ENCODE measurements at regions of chr22 and their contacts with region 1.

Region 1: DNA sequence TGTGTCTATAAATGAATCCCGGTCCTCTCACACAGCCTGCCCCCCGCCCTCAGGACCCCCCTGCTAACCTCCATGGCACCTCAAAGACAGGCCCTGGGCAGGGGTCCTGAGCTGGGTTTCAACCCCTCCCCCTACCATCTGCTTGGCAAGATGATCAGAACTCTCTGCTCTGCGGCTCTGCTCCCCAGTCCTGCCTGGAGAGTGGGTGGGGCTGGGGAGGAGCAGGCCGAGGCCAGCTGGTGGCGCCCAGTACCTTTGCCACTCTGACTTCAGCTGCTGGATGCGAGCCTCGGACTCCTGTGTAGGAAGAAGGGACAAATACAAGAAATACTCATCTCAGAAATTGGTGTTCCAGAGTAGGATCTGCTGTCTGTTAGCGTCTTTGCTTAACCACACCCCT is 15.0 kb downstream of the SUN2 start:
- DNase-seq: no peak
- ATAC-seq: peak in 1 of 2 experiments; percentile 27; a peak in 1 of 6 replicates
- H3K4me3 ChIP-seq: no peak overlapping the region
- H3K27ac ChIP-seq: no peak overlapping the region
- H3K4me1 ChIP-seq: no peaks in the 10 kb centered on the region
- CTCF ChIP-seq: no peak
- EP300 ChIP-seq: no peak
- POLR2A ChIP-seq: no peak
- RAD21 ChIP-seq: peak in 1 of 2 experiments; percentile 10; a peak in 1 of 5 replicates

Region 2: GRCh38 chr22:38631724-38632123 is 109.0 kb before region 1 on chr22:
- CTCF ChIA-PET with region 1: no interaction called
- POLR2A ChIA-PET with region 1: no interaction called
- DNase-seq: no peak
- ATAC-seq: no peak
- H3K4me3 ChIP-seq: no peak overlapping the region
- H3K27ac ChIP-seq: no peak overlapping the region
- H3K4me1 ChIP-seq: no peaks in the 10 kb centered on the region
- CTCF ChIP-seq: no peak
- EP300 ChIP-seq: no peak
- POLR2A ChIP-seq: no peak
- RAD21 ChIP-seq: no peak

Region 3: DNA sequence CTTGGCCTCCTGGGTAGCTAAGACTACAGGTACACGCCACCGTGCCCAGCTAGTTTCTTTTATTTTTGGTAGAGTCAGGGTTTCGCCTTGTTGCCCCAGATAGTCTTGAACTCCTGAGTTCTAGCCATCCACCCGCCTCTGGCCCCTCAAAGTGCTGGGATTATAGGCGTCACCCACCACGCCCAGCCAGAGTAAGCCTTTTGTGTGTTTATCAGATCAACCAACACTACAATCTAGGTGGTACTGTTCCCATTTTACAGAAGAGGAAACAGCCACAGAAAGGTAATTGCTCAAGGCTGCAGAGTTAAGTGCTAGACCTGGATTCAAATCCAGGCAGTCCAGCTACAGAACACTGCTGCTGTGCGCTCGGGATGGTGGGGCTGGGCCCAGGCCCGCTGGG is 55.9 kb before region 1 on chr22:
- CTCF ChIA-PET with region 1: no interaction called
- POLR2A ChIA-PET with region 1: no interaction called
- DNase-seq: no peak
- ATAC-seq: no peak
- H3K4me3 ChIP-seq: no peak overlapping the region
- H3K27ac ChIP-seq: no peak overlapping the region
- H3K4me1 ChIP-seq: no peaks in the 10 kb centered on the region
- CTCF ChIP-seq: no peak
- EP300 ChIP-seq: no peak
- POLR2A ChIP-seq: no peak
- RAD21 ChIP-seq: no peak

Region 4: DNA sequence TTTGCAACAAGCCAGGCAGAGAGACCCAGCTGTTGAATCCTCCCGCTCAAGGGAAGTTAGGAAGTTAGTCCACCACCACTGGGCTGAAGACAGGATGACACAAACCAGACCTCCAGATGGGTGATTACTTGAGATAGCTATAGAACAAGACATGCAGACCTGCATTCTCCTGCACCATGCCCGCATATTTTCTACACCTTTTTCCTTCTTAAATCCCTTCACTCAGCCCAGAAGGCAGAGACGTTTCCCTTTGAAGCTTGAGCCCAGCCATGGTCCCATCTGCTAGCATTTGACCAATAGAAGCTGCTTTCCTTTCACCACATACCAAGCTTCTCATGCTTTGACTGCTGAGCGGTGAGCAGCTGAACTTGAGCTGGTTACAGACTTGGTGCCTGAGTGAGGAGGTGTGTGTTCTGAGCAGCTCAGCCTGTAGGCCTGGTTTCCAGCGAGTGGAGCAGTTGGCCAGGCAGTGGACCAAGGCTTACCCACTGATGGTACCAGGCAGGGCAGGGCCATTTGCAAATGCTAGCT is 160.4 kb after region 1 on chr22:
- CTCF ChIA-PET with region 1: no interaction called
- POLR2A ChIA-PET with region 1: no interaction called
- DNase-seq: no peak
- ATAC-seq: no peak
- H3K4me3 ChIP-seq: no peak overlapping the region
- H3K27ac ChIP-seq: no peak overlapping the region
- H3K4me1 ChIP-seq: no peaks in the 10 kb centered on the region
- CTCF ChIP-seq: no peak
- EP300 ChIP-seq: no peak
- POLR2A ChIP-seq: no peak
- RAD21 ChIP-seq: no peak

Region 5: GRCh38 chr22:39195436-39195835 is 454.7 kb after region 1 on chr22:
- CTCF ChIA-PET with region 1: no interaction called
- POLR2A ChIA-PET with region 1: interaction called, 12 read pairs
- DNase-seq: no peak
- ATAC-seq: no peak
- H3K4me3 ChIP-seq: no peak overlapping the region
- H3K27ac ChIP-seq: no peak overlapping the region
- H3K4me1 ChIP-seq: no peaks in the 10 kb centered on the region
- CTCF ChIP-seq: no peak
- EP300 ChIP-seq: no peak
- POLR2A ChIP-seq: no peak
- RAD21 ChIP-seq: no peak

Measured in A549 (cell line).